ENCODE measurements at regions of chr7 and their contacts with region 1.

Region 1: DNA sequence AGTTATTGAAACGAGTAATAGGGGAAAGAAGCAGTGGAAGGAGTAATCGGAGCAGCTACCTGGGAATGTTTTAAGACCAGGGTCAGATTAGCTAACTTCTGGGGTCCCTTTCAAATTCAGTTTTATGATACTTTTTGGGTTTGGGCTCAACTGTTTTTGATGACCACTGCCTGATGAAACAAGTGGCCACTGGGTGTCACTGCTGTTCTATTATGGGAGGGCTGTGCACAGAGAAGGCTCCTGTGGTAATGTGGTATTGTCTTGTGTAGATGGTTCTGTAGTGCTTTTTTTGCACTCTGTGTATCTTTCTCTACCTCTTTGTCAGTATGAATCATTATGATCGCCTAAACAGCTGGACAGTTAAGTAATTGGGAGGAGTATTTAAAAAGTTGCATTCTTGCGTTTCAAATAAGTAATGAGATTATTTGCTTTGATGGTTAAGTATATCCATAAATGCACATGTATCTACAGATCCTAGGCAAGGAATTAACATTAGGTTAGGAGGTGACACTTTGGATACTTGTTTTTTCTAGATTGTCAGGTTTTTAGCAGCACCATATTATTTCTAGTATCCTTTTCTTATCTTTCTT is 128.4 kb downstream of the ABCA13 start:
- DNase-seq: peak in 1 of 2 donors; percentile 28
- H3K4me3 ChIP-seq: no peak overlapping the region
- CTCF ChIP-seq: no peak
- POLR2A ChIP-seq: no peak

Region 2: DNA sequence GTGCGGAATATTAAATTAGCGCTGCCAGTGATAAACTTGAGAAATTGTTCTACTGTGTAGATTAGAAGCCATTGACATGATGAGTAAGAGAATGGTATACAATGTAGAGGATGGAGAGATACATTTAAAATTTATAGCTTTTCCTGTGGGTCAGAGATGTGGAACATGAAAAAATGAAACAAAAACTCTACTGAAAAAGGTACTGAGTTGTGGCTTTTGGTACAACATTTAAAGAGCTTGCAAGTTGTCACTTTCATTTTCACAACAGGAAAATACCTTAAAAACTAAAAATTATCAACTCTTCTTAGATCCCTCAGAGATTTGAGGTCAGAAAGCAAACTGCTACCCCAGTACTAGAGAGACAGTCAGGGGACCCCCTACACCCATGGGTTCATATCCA is 275.8 kb after region 1 on chr7:
- intact Hi-C with region 1: loop called (anchors 5 kb)
- DNase-seq: no peak
- H3K4me3 ChIP-seq: no peak overlapping the region
- CTCF ChIP-seq: no peak
- POLR2A ChIP-seq: no peak